ENCODE measurements at regions of chr6 and their contacts with region 1.

Region 1: DNA sequence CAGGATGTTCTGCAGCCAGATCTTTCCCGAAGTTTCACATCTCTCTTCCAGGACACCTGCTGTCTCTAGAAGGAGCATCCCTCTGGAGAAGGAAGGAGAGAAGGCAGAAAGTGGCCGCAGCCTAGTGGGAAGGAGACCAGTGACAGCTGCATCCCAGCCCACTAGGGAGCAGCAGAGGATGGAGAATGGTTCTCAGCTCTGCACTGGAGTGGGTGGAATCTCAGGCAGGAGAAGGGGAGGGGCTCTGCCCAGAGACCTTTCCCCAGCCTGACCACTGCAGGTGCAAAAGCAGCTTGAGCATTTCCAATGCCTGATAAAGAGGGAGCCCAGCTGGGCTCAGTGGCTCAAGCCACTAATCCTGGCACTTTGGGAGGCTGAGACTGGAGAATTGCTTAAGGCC is 32.3 kb downstream of the NCR2 start:
- DNase-seq: peak; percentile 13
- H3K4me3 ChIP-seq: no peak overlapping the region
- H3K27ac ChIP-seq: no peak overlapping the region
- H3K27me3 ChIP-seq: peaks cover 41% of the 10 kb centered on the region
- CTCF ChIP-seq: peak; percentile 80

Region 2: DNA sequence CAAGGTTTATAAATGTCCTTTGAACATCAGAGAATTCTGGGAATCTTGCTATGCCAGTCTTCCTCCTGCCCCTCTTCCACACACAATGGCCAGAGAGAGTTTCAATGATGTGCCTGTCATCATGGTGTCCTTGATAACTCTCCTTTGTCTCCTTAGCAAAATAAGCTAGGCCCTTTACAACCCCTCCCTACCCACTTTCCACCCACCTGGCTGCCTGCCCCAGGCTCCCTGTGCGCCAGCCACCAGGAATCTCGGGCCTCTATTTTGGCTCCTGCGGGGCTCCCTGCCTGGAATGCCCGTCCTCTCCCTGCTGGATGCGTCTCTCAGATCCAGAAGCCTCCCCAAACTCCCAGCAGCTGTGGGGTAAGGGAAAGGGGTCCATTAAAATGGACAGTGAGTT is 28.6 kb after region 1 on chr6:
- CTCF ChIA-PET with region 1: interaction called, 10 read pairs
- POLR2A ChIA-PET with region 1: no interaction called
- DNase-seq: no peak
- H3K4me3 ChIP-seq: no peak overlapping the region
- H3K27ac ChIP-seq: no peak overlapping the region
- H3K27me3 ChIP-seq: peaks cover 40% of the 10 kb centered on the region
- CTCF ChIP-seq: no peak

Region 3: DNA sequence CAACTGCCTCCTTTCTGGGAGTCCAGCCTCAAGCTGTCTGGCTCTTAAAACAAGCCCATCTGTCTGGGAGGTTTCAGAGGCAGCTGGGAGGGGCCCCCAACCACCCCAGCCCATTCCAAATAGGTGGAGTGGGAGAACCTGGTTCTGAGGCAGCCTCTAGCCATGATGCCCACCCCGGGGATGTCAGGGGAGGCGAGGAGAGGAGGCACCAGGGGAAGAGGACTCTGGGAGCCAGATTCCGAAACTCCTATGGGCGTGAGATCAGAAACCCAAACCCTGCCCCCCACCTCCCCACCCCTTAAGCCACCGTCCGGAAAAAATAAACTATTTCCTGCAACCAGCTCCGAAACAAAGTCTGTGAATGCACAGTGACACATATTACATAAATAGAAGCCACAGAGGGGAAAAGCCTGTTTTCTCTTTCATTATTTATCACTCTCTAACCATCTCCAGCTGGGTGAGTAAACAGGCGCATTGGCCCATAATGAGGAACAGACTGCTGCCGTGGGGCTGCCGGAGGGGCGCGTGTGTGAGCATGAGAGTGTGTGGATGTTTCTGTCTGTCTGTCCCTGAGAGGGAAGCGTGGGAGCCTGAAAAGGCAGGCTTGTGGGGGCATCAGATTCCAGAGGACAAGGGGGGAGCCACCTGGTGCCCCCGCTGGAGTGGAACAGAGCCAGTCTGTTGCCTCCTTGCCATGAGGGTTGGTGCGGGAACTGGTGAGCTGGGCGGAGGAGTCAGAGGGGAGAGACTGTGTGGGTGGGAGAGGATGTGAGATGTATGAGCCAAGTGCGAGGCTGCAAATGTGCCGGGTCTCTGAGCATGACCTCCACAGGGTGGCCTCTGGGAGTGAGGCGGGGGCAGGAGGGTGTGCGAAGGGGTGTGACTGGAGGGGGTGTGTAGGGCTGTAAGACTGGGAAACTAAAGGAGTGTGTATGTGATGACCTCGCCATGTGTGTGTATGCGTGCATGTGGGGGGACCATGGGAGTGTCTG is 164.2 kb after region 1 on chr6:
- CTCF ChIA-PET with region 1: no interaction called
- POLR2A ChIA-PET with region 1: no interaction called
- DNase-seq: peak; percentile 23
- H3K4me3 ChIP-seq: no peak overlapping the region
- H3K27ac ChIP-seq: no peak overlapping the region
- H3K27me3 ChIP-seq: no peaks in the 10 kb centered on the region
- CTCF ChIP-seq: no peak

Region 4: DNA sequence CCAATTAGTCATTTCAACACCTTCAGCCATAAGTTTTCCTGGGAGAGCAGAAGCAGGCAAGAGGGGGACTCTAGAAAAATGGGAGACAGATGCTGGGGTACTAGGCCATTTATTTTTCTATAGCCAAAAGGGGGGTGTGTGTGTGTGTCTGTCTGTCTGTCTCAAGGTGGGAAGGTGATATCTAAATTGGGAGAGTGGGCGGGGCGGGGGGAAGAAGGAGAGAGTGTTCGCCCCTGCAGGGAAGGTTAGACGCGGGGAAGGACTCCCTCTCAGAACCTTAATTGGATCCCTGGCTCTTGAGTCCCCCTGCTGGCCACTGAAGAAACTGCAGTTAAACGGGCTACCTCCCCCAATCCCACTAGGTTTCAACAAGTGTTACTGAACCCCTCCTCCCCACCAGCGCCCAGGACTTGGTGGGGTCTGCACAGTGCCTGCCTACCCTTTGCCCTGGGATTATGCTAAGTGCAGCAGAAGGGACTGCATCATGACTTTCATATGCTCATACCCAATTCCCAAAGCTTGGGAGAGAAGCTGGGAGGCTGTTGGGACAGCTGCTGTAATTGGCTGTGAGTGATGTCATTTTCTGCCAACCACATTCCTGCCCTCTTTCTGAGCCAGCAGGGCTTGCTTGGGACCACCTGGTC is 224.3 kb after region 1 on chr6:
- CTCF ChIA-PET with region 1: interaction called, 195 read pairs
- POLR2A ChIA-PET with region 1: no interaction called
- DNase-seq: peak; percentile 27
- H3K4me3 ChIP-seq: no peak overlapping the region
- H3K27ac ChIP-seq: no peak overlapping the region
- H3K27me3 ChIP-seq: no peaks in the 10 kb centered on the region
- CTCF ChIP-seq: peak; percentile 93

Region 5: DNA sequence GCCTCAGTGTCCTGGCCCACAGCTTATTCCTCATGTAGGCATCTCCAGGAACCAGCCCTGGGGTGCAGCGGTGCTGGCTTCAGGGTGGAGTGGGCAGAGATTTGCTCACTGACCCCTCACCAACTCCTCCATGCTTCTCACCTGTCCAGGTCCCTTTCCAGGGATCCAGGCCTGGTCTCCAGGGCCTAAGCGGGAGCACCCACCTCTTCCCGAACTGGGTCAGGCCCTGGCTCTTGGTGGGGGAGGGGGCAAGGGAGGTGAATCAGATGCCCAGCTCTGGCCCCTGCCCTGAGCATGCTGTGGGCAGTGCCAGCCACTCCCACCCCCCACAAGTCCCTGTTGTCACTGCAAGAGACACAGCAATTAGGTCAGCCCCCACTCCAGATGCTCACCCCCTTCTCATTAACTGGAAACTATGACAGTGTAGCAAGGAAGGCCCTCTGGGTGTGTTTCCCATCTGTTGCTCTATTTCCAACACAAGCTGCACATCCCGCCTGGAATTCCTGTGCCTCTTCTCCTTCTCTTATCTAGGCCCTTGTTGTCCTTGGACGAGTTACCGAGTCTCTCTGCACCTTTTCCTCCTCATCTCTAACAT is 307.6 kb after region 1 on chr6:
- CTCF ChIA-PET with region 1: interaction called, 98 read pairs
- POLR2A ChIA-PET with region 1: no interaction called
- DNase-seq: no peak
- H3K4me3 ChIP-seq: no peak overlapping the region
- H3K27ac ChIP-seq: no peak overlapping the region
- H3K27me3 ChIP-seq: peaks cover 39% of the 10 kb centered on the region
- CTCF ChIP-seq: no peak

Region 6: GRCh38 chr6:41697861-41698781 is 330.4 kb after region 1 on chr6:
- CTCF ChIA-PET with region 1: interaction called, 12 read pairs
- POLR2A ChIA-PET with region 1: no interaction called
- DNase-seq: peak; percentile 89
- H3K4me3 ChIP-seq: peak overlapping the region; percentile 18
- H3K27ac ChIP-seq: peak overlapping the region; percentile 99
- H3K27me3 ChIP-seq: no peaks in the 10 kb centered on the region
- CTCF ChIP-seq: no peak

Region 7: DNA sequence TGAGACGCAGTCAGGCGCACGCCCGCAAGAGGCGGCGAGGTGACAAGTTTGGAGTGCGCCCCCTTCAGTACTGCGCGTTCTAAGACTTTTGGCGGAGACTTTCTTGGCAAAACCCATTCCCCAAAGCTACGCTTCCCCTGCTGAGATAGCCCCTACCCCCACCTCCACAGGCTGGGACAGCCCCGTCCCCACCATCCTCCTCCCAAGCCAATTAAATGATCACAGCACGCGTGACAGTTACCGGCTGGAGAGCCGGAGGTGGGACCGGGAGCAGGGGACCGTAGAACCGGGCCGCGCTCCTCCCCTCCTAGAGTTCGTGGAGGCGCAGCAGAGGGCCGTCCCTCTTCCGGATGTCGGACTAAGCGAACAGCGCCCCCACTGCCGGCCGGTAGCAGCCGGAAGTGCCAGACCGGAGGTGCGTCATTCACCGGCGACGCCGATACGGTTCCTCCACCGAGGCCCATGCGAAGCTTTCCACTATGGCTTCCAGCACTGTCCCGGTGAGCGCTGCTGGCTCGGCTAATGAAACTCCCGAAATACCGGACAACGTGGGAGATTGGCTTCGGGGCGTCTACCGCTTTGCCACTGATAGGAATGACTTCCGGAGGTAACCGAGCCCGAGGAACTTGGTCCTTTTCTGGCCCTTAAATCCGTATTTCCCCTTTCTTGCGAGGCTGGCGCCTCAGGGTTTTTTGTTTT is 419.7 kb after region 1 on chr6 and contains the start of gene TOMM6:
- CTCF ChIA-PET with region 1: interaction called, 20 read pairs
- POLR2A ChIA-PET with region 1: no interaction called
- DNase-seq: peak; percentile 85
- H3K4me3 ChIP-seq: peak within 1 kb of the TSS; percentile 100
- H3K27ac ChIP-seq: peak within 1 kb of the TSS; percentile 84
- H3K27me3 ChIP-seq: no peaks in the 10 kb centered on the region
- CTCF ChIP-seq: peak; percentile 75
- polyA plus RNA-seq, gene TOMM6: 165 and 192 TPM in 2 replicates

Measured in AG04450 (cell line).